Right ventricle myocardium superior (tissue), 1 donor: ENCODE measurements at regions of chr1 and their contacts with region 1.

Region 1: GRCh38 chr1:60281360-60281932 is 207.9 kb upstream of the C1orf87 start:
- DNase-seq: peak; percentile 49
- ATAC-seq: peak; percentile 91

Region 2: GRCh38 chr1:60376196-60376848 is 94.9 kb after region 1 on chr1:
- intact Hi-C with region 1: no loop called
- DNase-seq: no peak
- ATAC-seq: no peak

Region 3: DNA sequence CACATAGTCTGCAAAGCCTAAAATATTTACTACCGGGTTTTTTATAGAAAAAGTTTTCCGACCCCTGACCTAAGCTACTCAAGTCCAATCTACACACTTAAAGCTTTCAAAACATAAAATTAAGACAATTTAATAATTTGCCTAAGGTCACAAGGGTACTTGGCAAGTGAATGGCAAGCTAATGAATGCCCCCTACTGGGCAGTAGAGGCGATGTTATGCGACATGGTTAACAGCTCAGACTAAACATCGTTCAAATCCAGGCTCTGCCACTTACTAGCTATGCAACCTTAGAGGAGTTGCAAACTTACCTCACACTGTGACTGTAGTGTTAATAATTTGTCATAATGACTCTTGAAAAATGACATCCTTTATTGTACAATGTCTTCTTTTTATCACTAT is 483.8 kb after region 1 on chr1:
- intact Hi-C with region 1: loop called (anchors 5 kb)
- DNase-seq: no peak
- ATAC-seq: no peak